OCI-LY7 (cell line): ENCODE measurements at regions of chr15 and their contacts with region 1.

Region 1: DNA sequence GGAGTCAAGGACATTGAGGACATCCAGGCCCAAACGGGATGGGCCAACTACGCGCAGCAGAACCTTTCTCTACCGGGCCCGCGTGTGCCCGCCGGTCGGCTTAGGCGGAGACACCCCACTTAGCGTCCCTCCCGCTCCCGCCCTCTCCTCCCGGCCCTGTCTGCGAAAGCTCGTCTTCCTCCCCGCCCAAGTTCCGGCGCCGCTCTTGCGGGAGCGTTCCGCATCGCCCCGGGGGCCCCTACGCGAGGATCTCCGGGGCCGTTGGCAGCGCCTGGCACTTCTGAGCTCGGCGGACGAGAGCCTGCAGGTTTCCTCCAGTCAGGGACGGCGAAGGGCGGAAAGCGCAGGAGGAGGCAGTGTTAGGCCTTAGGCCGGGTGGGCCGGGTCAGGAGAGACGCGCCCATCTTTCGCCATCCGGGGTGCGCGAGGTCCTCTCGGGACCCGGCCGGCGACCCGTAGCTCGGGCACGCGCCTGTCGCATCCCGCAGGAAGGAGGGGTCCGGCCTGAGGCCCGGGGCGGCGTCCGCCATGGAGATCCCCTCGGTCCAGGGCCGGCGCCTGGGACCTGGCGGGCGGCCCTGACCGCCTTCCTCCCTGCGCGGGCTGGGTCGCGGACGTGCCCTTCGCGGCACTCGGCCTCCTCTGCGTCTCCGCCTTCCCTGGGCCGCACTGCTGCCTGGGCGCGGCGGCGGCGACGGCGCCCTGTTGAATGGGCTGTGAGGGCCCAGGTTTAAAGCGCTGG is at the start of gene FEM1B:
- DNase-seq: peak; percentile 90
- H3K4me3 ChIP-seq: peak within 1 kb of the TSS; percentile 82
- H3K27ac ChIP-seq: peak within 1 kb of the TSS; percentile 79
- H3K4me1 ChIP-seq: peaks cover 33% of the 10 kb centered on the region
- CTCF ChIP-seq: no peak
- total RNA-seq, gene FEM1B: 35.5 and 37.1 TPM in 2 replicates

Region 2: DNA sequence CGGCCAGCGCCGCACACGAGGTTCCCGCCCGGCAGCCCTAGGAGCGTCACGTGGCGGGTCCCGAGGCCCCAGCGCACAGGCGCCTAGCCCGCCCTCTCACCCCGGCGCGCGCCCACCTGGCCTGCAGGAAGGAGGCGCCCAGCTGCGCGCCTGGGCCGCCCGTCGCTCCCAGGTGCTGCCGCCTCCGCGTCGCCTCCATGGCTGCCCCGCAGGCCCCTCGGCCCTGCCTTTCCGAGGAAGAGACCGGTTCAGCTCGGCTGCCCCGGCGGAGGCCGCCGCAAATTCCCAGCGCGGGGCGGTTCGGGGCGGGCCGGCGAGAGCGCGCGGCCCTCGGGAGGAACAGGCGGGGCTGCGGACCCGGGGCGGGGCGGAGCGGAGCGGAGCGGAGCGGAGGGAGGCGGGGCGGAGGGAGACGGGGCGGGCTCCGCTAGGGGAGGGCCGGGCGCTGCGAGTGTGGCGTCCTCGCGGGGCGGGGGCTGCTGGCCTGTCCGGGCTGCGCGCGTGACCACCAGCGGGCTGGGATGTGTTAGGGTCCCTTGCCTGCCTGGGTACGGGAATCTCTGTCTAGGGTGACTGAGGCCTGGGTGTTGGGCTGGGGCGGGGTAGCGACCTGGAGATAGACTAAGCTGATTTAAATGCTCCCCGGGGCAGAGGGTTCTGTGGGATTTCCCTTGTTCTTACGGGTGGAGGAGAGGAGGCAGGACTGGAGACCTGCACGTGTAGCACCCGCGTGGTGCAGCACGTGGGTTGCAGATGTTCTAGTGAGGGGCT is 48.2 kb before region 1 on chr15 and contains the start of gene CLN6:
- CTCF ChIA-PET with region 1: no interaction called
- POLR2A ChIA-PET with region 1: no interaction called
- intact Hi-C with region 1: loop called (anchors 2 kb)
- DNase-seq: peak; percentile 92
- H3K4me3 ChIP-seq: peak within 1 kb of the TSS; percentile 80
- H3K27ac ChIP-seq: peak within 1 kb of the TSS; percentile 80
- H3K4me1 ChIP-seq: peaks cover 49% of the 10 kb centered on the region
- CTCF ChIP-seq: no peak; the same call in 1 of the 2 replicates
- total RNA-seq, gene CLN6: 50.3 and 60.2 TPM in 2 replicates

Region 3: DNA sequence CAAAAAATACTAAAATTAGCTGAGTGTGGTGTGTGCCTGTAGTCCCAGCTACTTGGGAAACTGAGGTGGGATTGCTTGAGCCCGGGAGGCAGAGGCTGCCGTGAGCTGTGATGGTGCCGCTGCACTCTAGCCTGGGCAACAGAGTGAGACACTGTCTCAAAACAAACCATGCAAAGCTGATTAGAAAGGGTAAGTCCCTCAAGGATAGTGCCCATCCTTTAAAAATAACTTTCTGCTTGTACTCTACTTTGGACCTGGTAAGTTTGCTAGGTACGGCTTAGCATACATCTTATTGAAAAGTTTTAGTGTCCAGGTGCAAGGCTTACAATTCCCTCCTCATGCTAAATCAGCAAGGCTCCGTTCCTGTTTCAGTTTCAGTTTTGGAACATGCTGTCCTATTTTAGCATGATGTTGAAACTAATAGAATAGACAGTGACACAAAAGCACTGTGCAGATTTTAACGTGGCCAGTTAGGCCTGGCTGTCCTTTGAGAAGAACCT is 21.2 kb after region 1 on chr15:
- CTCF ChIA-PET with region 1: no interaction called
- POLR2A ChIA-PET with region 1: interaction called, 6 read pairs
- intact Hi-C with region 1: loop called (anchors 2 kb)
- DNase-seq: peak; percentile 81
- H3K4me3 ChIP-seq: peak overlapping the region; percentile 42
- H3K27ac ChIP-seq: peak overlapping the region; percentile 46
- H3K4me1 ChIP-seq: peaks cover 29% of the 10 kb centered on the region
- CTCF ChIP-seq: no peak